Activated CD4-positive, alpha-beta memory T cell treated with anti-CD3 and anti-CD28 coated beads, Interleukin-2, amount 10 ng/mL, durations not matched to agents 7 days and 5 days (primary cell): ENCODE measurements at regions of chr2 and their contacts with region 1.

Region 1: DNA sequence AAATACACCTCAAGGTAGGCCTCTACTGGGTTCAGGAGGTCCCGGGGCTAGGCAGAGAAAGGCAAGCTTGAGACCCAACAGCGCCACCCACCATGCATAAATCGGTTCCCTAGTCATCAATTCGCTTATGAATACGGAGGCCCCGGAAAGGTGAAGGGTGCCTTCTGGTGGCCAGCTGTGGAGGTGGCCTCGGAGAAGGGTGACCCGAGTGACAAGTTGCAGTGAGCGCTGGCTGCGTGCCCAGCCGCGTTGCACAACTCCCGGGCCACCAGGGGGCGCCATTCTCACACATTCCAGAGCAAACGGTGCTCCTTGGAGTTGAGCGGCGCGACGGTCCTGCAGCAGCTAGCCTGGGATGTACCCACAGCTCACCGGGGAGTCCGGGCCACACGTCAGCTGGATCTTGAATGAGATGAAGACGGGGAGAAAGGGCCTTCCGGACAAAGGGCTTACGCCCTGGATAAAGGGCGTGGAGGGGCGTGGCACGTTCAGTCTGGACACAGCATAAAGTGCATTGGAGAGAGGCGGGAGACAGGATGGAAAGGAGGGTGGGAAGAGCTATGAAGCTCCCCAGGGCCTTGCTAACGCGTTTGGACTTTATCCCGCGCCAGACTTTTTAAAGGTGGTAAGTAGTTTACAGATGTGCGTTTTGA is 20.4 kb downstream of the TMSB10 start:
- DNase-seq: peak; percentile 99
- H3K4me3 Mint-ChIP-seq: peak overlapping the region; percentile 82
- H3K27ac Mint-ChIP-seq: peak overlapping the region; percentile 78
- H3K4me1 Mint-ChIP-seq: peaks cover 43% of the 10 kb centered on the region
- H3K27me3 Mint-ChIP-seq: no peaks in the 10 kb centered on the region

Region 2: GRCh38 chr2:84846041-84846663 is 79.7 kb before region 1 on chr2:
- CTCF ChIA-PET with region 1: interaction called, 13 read pairs
- POLR2A ChIA-PET with region 1: interaction called, 11 read pairs
- DNase-seq: peak; percentile 41
- H3K4me3 Mint-ChIP-seq: peak overlapping the region; percentile 19
- H3K27ac Mint-ChIP-seq: peak overlapping the region; percentile 96
- H3K4me1 Mint-ChIP-seq: peaks cover 91% of the 10 kb centered on the region
- H3K27me3 Mint-ChIP-seq: no peaks in the 10 kb centered on the region

Region 3: DNA sequence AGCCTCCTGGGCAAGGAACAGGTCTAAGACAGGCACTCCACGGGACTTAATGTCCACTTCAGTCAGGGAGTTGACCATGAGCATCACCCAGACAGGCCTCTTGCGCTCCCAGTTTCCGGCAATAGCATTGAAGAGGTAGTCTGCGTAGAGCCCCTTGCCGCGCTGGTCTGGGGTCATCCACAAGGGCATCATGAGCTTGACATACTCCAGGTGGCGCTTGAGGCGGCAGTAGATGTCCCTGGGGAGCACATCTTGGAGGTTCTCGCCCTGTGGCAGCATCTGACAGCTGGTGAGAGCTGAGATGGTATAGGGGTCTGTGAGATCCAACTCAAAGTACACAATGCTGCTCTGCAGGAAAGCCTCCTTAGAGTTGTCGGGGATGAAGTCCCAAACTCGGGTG is 55.5 kb before region 1 on chr2:
- CTCF ChIA-PET with region 1: interaction called, 23 read pairs
- POLR2A ChIA-PET with region 1: interaction called, 7 read pairs
- DNase-seq: no peak
- H3K4me3 Mint-ChIP-seq: no peak overlapping the region
- H3K27ac Mint-ChIP-seq: no peak overlapping the region
- H3K4me1 Mint-ChIP-seq: peaks cover 51% of the 10 kb centered on the region
- H3K27me3 Mint-ChIP-seq: no peaks in the 10 kb centered on the region

Region 4: GRCh38 chr2:84894758-84895520 is 30.9 kb before region 1 on chr2:
- CTCF ChIA-PET with region 1: interaction called, 60 read pairs
- POLR2A ChIA-PET with region 1: interaction called, 33 read pairs
- DNase-seq: no peak
- H3K4me3 Mint-ChIP-seq: peak overlapping the region; percentile 35
- H3K27ac Mint-ChIP-seq: peak overlapping the region; percentile 59
- H3K4me1 Mint-ChIP-seq: peaks cover 62% of the 10 kb centered on the region
- H3K27me3 Mint-ChIP-seq: no peaks in the 10 kb centered on the region

Region 5: GRCh38 chr2:84939426-84940087 is 13.7 kb after region 1 on chr2:
- CTCF ChIA-PET with region 1: interaction called, 93 read pairs
- POLR2A ChIA-PET with region 1: interaction called, 90 read pairs
- DNase-seq: peak; percentile 87
- H3K4me3 Mint-ChIP-seq: peak overlapping the region; percentile 72
- H3K27ac Mint-ChIP-seq: peak overlapping the region; percentile 98
- H3K4me1 Mint-ChIP-seq: peaks cover 53% of the 10 kb centered on the region
- H3K27me3 Mint-ChIP-seq: no peaks in the 10 kb centered on the region

Region 6: GRCh38 chr2:85001595-85001994 is 75.7 kb after region 1 on chr2:
- CTCF ChIA-PET with region 1: interaction called, 14 read pairs
- POLR2A ChIA-PET with region 1: no interaction called
- DNase-seq: no peak
- H3K4me3 Mint-ChIP-seq: no peak overlapping the region
- H3K27ac Mint-ChIP-seq: no peak overlapping the region
- H3K4me1 Mint-ChIP-seq: peaks cover 38% of the 10 kb centered on the region
- H3K27me3 Mint-ChIP-seq: no peaks in the 10 kb centered on the region

Region 7: DNA sequence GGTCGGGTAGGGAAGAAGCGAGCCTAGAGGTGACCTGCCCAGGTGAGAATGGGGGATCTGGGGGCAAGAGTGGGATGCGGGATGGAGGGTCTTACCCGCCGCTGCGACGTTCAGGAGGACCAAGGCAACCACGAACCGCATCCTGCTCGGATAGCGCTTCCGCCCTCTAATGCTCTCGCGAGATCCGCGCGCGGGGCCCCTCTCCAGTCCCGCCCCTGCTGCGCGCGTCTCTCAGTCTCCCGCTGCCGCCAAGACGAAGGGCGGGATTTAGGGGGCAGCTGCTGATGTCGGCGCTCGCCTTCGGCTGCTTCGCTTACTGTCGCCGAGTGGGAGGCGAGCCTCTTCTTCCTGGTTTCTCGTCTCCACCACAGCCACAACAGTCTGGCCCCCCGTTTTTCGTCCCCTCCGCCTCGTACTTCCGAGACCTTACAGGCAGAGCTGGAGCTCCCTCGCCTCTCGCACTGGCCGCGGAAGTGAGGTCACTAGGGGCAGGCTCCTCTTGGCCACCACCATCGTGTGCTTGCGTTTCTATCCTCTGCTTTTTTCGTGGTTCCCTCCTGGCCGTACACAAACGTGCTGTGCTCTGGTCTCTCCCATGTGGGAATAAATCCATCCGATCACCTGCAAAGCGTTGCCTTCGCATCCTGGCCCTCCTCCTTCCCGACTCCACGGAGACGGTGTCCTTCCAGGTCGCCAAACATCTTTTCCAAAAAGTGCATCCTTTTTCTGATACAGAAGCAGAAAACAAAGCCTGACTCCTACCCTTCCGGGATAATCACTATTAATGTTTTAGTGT is 402.2 kb after region 1 on chr2 and contains the start of gene TGOLN2:
- CTCF ChIA-PET with region 1: no interaction called
- POLR2A ChIA-PET with region 1: interaction called, 11 read pairs
- DNase-seq: peak; percentile 95
- H3K4me3 Mint-ChIP-seq: peak within 1 kb of the TSS; percentile 93
- H3K27ac Mint-ChIP-seq: peak within 1 kb of the TSS; percentile 100
- H3K4me1 Mint-ChIP-seq: peaks cover 48% of the 10 kb centered on the region
- H3K27me3 Mint-ChIP-seq: no peaks in the 10 kb centered on the region
- total RNA-seq, gene TGOLN2: 129 to 131 TPM